Ascending aorta (tissue), 2 donors: ENCODE measurements at regions of chr15 and their contacts with region 1.

Region 1: GRCh38 chr15:41944313-41944940 is 27.9 kb downstream of the EHD4 start:
- DNase-seq: peak in 1 of 2 donors; percentile 84
- H3K4me3 ChIP-seq: no peak overlapping the region
- H3K27ac ChIP-seq: peak overlapping the region; percentile 79 to 85
- H3K4me1 ChIP-seq: peaks cover 6 to 49% of the 10 kb centered on the region in 2 donors
- H3K27me3 ChIP-seq: no peaks in the 10 kb centered on the region
- CTCF ChIP-seq: no peak

Region 2: DNA sequence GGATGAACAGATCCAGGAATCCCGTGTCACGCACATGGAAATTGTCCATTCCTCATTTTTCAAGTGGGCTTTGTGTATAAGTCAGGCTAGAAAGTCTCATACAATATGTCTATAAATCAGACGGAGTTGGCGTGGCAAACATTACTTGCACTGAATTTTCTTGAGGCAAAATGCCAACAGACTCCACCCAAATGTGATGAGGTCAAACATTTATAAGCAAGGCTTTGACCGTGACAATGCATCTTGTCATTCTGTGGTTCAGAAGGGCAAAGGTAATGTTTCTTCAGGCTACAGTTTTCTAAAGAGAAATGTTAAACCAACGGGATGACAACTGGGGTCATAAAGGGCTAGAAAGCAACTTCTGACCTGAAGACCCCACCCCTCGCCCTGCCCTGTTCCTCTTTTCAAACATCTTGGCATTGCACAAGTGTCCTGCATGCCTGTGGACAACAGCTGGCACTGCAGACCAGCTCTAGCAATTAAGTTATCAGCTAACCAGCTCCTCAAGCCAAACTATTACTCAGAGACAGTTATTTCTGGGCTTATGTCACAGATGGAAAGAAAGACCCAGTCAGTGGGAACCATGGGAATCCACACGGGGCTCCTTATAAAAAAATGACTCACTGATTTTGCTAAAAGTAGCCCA is 14.1 kb before region 1 on chr15:
- intact Hi-C with region 1: loop called (anchors 2 kb)
- DNase-seq: peak in 1 of 2 donors; percentile 88
- H3K4me3 ChIP-seq: no peak overlapping the region
- H3K27ac ChIP-seq: peak overlapping the region; percentile 74 to 80
- H3K4me1 ChIP-seq: peaks cover 35 to 83% of the 10 kb centered on the region in 2 donors
- H3K27me3 ChIP-seq: no peaks in the 10 kb centered on the region
- CTCF ChIP-seq: peak; percentile 23 to 55 (median 49)